ENCODE measurements at regions of chr19 and their contacts with region 1.

Region 1: GRCh38 chr19:38769635-38770211 is 3.6 kb downstream of the LGALS7 start:
- DNase-seq: peak in 1 of 2 experiments; percentile 93
- H3K4me3 ChIP-seq: peak overlapping the region in 1 of 4 experiments; percentile 39; a peak in 1 of 8 replicates
- H3K27ac ChIP-seq: no peak overlapping the region
- H3K4me1 ChIP-seq: no peaks in the 10 kb centered on the region
- H3K27me3 ChIP-seq: no peaks in the 10 kb centered on the region; a peak in 1 of 7 replicates
- CTCF ChIP-seq: peak; percentile 67 to 70 (median 70)
- EP300 ChIP-seq: no peak
- POLR2A ChIP-seq: no peak
- RAD21 ChIP-seq: peak; percentile 40 to 61; a peak in 3 of 4 replicates

Region 2: GRCh38 chr19:38739440-38740256 is 30.1 kb before region 1 on chr19:
- CTCF ChIA-PET with region 1: interaction called, 14 read pairs
- POLR2A ChIA-PET with region 1: interaction called, 6 read pairs
- DNase-seq: no peak
- H3K4me3 ChIP-seq: no peak overlapping the region
- H3K27ac ChIP-seq: no peak overlapping the region
- H3K4me1 ChIP-seq: peaks cover 0 to 9% (median 6%) of the 10 kb centered on the region in 4 experiments; a peak in 6 of 7 replicates
- H3K27me3 ChIP-seq: peaks cover 4 to 16% (median 13%) of the 10 kb centered on the region in 4 experiments
- CTCF ChIP-seq: no peak
- EP300 ChIP-seq: no peak
- POLR2A ChIP-seq: no peak
- RAD21 ChIP-seq: no peak

Region 3: GRCh38 chr19:38759590-38760003 is 10.1 kb before region 1 on chr19:
- CTCF ChIA-PET with region 1: interaction called, 10 read pairs
- POLR2A ChIA-PET with region 1: interaction called, 7 read pairs
- DNase-seq: no peak
- H3K4me3 ChIP-seq: no peak overlapping the region
- H3K27ac ChIP-seq: no peak overlapping the region
- H3K4me1 ChIP-seq: no peaks in the 10 kb centered on the region
- H3K27me3 ChIP-seq: no peaks in the 10 kb centered on the region
- CTCF ChIP-seq: no peak
- EP300 ChIP-seq: no peak
- POLR2A ChIP-seq: no peak
- RAD21 ChIP-seq: no peak

Measured in H1 (cell line).